Left lung (tissue), 14 donors: ENCODE measurements at regions of chr3 and their contacts with region 1.

Region 1: DNA sequence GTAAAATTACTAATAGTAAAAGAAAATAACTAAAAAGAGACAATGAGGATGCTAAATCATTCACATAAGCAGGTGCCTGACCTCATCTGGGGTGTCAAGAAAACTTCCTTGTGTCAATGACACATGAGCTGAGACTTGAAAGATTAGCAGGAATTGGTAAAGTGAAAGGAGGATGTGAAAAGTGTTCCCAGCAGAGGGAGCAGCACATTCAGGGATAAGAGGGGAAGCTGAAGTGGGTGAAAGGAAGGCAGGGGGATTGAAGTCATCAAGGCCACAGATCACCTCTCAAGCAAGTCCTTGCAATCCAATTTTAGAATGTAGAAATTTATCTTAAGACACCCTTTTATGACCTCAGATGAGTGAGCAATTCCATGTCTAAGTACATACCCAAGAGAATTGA is 60.2 kb upstream of the ACP3 start:
- DNase-seq: peak in 1 of 4 donors; percentile 55
- ATAC-seq: peak; percentile 60
- H3K4me3 ChIP-seq: no peak overlapping the region
- H3K27ac ChIP-seq: no peak overlapping the region
- H3K4me1 ChIP-seq: peaks cover 6 to 8% of the 10 kb centered on the region in 2 donors
- H3K27me3 ChIP-seq: no peaks in the 10 kb centered on the region
- CTCF ChIP-seq: peak; percentile 21 to 28

Region 2: GRCh38 chr3:131925571-131925970 is 331.4 kb before region 1 on chr3:
- intact Hi-C with region 1: no loop called
- DNase-seq: no peak
- ATAC-seq: no peak
- H3K4me3 ChIP-seq: no peak overlapping the region
- H3K27ac ChIP-seq: no peak overlapping the region
- H3K4me1 ChIP-seq: no peaks in the 10 kb centered on the region
- H3K27me3 ChIP-seq: no peaks in the 10 kb centered on the region
- CTCF ChIP-seq: no peak

Region 3: DNA sequence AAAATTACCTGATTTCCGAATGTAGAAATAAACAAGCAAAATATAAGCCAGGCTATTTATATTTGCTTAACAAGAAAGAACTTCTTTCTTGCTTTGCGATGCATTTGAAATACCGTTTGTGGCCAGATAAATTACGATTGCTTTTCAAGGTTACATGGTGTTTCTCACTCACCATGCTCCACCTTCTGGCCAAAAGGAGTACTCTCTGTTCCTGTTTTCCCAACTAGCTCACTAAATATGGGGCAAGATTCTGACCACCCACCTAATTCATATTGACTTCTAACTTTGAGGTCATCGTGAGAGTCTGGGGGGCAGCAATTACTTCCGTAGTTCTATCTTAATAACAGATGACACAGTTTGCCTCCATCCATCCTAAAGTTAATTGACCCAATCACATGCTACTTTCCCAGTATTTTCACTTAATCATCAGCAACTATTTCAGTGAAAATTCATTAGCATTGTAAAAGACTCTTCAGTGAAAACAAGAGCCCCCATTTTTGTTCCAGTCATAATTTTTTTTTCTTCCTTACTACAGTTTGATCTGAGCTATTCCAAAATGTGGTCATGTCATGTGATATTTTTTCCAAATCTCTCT is 86.1 kb after region 1 on chr3:
- intact Hi-C with region 1: loop called in 1 of 2 experiments (anchors 5 kb)
- DNase-seq: peak in 2 of 4 donors; percentile 55 to 73
- ATAC-seq: peak; percentile 91
- H3K4me3 ChIP-seq: no peak overlapping the region
- H3K27ac ChIP-seq: no peak overlapping the region
- H3K4me1 ChIP-seq: peaks cover 0 to 13% of the 10 kb centered on the region in 2 donors
- H3K27me3 ChIP-seq: no peaks in the 10 kb centered on the region
- CTCF ChIP-seq: peak; percentile 71 to 73

Region 4: DNA sequence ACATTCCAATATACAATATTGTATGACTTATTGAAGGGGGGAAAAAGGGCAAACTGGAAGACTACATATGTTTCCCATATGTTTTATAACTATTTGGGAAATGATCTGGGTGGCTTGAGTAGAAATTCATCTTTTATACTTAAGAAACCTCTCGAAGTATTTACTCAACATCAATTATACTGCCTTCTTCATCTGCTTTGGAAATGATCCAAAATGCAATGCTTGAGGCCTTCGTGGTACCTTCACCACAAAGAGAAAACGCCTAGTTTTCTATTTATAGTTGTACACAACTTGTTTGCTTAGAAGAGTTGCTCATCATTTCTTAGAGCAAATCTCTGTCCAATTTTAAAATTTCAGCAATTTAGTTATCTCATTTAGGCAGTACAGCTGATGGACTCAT is 358.9 kb after region 1 on chr3:
- intact Hi-C with region 1: no loop called
- DNase-seq: no peak
- ATAC-seq: no peak
- H3K4me3 ChIP-seq: no peak overlapping the region
- H3K27ac ChIP-seq: no peak overlapping the region
- H3K4me1 ChIP-seq: no peaks in the 10 kb centered on the region
- H3K27me3 ChIP-seq: no peaks in the 10 kb centered on the region
- CTCF ChIP-seq: no peak